ENCODE measurements at regions of chr5 and their contacts with region 1.

Region 1: DNA sequence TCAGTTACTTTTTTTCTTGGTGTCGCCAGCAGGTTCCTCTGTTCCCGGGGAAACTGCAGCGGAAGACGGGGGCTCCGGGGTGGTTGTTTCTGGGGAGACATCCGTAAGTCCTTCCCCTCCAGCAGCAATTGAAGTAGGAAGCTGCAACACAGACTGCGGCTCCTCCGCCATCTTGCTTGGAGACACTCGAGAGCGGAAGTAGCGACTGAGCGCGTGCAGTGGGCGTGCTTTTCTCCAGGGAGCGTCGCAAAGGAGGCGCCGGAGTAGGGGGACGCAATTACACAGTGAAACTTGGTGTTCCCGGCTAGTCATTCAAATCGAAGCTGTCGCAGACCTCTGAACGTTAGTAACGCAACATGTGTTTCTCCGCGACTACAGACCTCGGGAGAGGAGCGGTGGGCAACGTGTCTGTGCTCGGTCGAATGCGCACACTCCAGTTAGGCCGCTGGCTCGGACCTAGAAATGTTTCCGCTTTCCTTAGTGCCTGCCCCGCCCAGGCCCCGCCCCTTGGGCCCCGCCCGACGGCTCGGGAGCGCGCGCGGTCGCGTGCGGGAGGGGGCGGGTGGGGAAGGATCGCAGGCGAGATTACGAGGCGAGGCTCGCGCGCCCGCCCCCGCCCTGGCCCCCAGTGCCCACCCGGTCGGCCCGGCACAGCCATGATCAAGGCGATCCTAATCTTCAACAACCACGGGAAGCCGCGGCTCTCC is at the starts of genes AP3S1 and ATG12:
- DNase-seq: peak; percentile 72 to 94
- H3K4me3 ChIP-seq: peak within 1 kb of the TSS; percentile 91 to 92
- H3K27ac ChIP-seq: peak within 1 kb of the TSS; percentile 94 to 96
- H3K4me1 ChIP-seq: peaks cover 5 to 36% of the 10 kb centered on the region in 2 donors
- H3K27me3 ChIP-seq: no peaks in the 10 kb centered on the region
- CTCF ChIP-seq: no peak
- total RNA-seq, gene AP3S1: 140 TPM
- total RNA-seq, gene ATG12: 30.3 TPM

Region 2: GRCh38 chr5:115169487-115170133 is 671.9 kb before region 1 on chr5 and contains the start of gene TRIM36:
- intact Hi-C with region 1: loop called (anchors 5 kb)
- DNase-seq: peak; percentile 79 to 94
- H3K4me3 ChIP-seq: peak within 1 kb of the TSS; percentile 83 to 90
- H3K27ac ChIP-seq: peak within 1 kb of the TSS; percentile 65 to 69
- H3K4me1 ChIP-seq: peaks cover 4 to 6% of the 10 kb centered on the region in 2 donors
- H3K27me3 ChIP-seq: no peaks in the 10 kb centered on the region
- CTCF ChIP-seq: peak in 2 of 3 experiments; percentile 28 to 33
- total RNA-seq, gene TRIM36: 31.7 TPM

Region 3: GRCh38 chr5:115296124-115297022 is 545.2 kb before region 1 on chr5 and contains the start of gene CCDC112:
- intact Hi-C with region 1: loop called (anchors 5 kb)
- DNase-seq: peak; percentile 40 to 82
- H3K4me3 ChIP-seq: peak within 1 kb of the TSS; percentile 79 to 100
- H3K27ac ChIP-seq: no peak within 1 kb of the TSS
- H3K4me1 ChIP-seq: peaks cover 0 to 3% of the 10 kb centered on the region in 2 donors
- H3K27me3 ChIP-seq: no peaks in the 10 kb centered on the region
- CTCF ChIP-seq: no peak
- total RNA-seq, gene CCDC112: 10.4 TPM

Region 4: GRCh38 chr5:115544436-115545350 is 296.8 kb before region 1 on chr5 and contains the start of gene FEM1C:
- intact Hi-C with region 1: loop called (anchors 2 kb)
- DNase-seq: peak; percentile 92 to 99
- H3K4me3 ChIP-seq: peak within 1 kb of the TSS; percentile 75 to 90
- H3K27ac ChIP-seq: peak within 1 kb of the TSS; percentile 95 to 99
- H3K4me1 ChIP-seq: peaks cover 3 to 14% of the 10 kb centered on the region in 2 donors
- H3K27me3 ChIP-seq: no peaks in the 10 kb centered on the region
- CTCF ChIP-seq: no peak
- total RNA-seq, gene FEM1C: 11.1 TPM

Region 5: DNA sequence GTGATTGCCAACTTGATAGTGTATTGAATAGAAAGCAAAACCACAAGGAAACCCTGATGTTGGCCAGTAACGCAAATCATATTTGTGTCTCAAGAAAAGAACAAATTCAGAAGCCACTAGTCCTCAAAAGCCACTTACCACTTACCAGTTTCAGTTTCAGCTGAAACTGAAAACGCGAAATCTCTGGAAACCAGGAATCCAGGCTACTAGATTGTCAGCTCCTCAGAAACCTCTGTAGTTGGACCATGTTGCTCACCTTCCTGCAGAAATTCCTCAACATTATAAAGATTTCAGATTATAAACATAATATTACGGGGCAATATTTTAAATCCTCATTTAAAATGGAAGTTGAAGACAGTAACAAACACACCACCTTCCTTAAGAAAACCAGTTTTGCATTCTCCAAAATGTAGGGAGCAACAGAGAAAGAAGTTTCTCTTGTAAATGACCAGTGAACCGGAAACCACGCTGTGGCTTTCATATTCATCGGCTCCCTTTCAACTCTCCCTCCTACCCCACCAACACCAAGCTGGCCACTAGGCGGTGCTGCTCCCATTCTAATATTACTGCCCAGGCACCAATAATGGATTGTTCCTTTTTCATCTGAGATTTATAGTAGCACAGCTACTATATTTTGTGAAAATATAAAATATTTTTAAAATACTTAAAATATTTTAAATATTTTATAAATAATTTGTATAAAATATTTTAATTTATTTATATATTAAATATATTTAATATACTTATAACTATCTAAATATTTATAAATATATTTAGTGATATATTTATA is 207.0 kb before region 1 on chr5:
- intact Hi-C with region 1: loop called (anchors 2 kb)
- DNase-seq: peak; percentile 24 to 94
- H3K4me3 ChIP-seq: peak overlapping the region; percentile 52 to 59
- H3K27ac ChIP-seq: peak overlapping the region; percentile 40 to 83
- H3K4me1 ChIP-seq: no peaks in the 10 kb centered on the region
- H3K27me3 ChIP-seq: no peaks in the 10 kb centered on the region
- CTCF ChIP-seq: peak; percentile 84 to 89 (median 88)

Region 6: GRCh38 chr5:115816226-115817081 is 25.1 kb before region 1 on chr5 and contains the start of gene CDO1:
- intact Hi-C with region 1: loop called (anchors 2 kb)
- DNase-seq: peak in 1 of 2 donors; percentile 78
- H3K4me3 ChIP-seq: peak within 1 kb of the TSS; percentile 56 to 89
- H3K27ac ChIP-seq: peak within 1 kb of the TSS; percentile 85 to 88
- H3K4me1 ChIP-seq: peaks cover 0 to 3% of the 10 kb centered on the region in 2 donors
- H3K27me3 ChIP-seq: no peaks in the 10 kb centered on the region
- CTCF ChIP-seq: no peak
- total RNA-seq, gene CDO1: 36.0 TPM

Region 7: DNA sequence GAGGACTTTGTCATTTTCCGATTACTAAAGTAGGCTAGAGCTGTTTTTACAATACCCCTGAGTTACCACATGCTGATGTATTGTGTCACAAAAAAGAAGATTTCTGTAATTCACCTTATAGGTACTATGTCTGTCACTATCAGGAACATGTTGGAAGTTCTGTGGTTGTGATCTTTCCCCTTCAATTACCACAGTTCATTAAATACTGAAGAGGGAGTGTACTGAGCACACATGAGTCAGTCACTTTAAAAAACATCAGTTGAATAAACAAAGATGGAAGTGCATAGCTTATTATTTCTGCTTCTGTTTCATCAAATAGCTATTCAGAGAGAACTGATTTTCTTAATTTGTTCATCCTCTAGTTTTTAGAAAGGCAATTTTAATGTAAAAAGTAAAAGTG is 31.9 kb after region 1 on chr5:
- intact Hi-C with region 1: no loop called
- DNase-seq: no peak
- H3K4me3 ChIP-seq: no peak overlapping the region
- H3K27ac ChIP-seq: no peak overlapping the region
- H3K4me1 ChIP-seq: peaks cover 0 to 5% of the 10 kb centered on the region in 2 donors
- H3K27me3 ChIP-seq: no peaks in the 10 kb centered on the region
- CTCF ChIP-seq: no peak

Region 8: GRCh38 chr5:116084871-116085715 is 243.6 kb after region 1 on chr5 and contains the start of gene COMMD10:
- intact Hi-C with region 1: loop called (anchors 5 kb)
- DNase-seq: peak; percentile 21 to 84
- H3K4me3 ChIP-seq: peak within 1 kb of the TSS; percentile 97 to 98
- H3K27ac ChIP-seq: peak within 1 kb of the TSS; percentile 87 to 91
- H3K4me1 ChIP-seq: peaks cover 0 to 13% of the 10 kb centered on the region in 2 donors
- H3K27me3 ChIP-seq: no peaks in the 10 kb centered on the region
- CTCF ChIP-seq: no peak
- total RNA-seq, gene COMMD10: 25.0 TPM

Measured in ascending aorta (tissue), 2 donors.